ENCODE measurements at regions of chr19 and their contacts with region 1.

Region 1: GRCh38 chr19:11125994-11126685 is 29.4 kb downstream of the SPC24 start:
- H3K4me3 ChIP-seq: no peak overlapping the region
- H3K27ac ChIP-seq: no peak overlapping the region
- H3K4me1 ChIP-seq: no peaks in the 10 kb centered on the region
- CTCF ChIP-seq: peak; percentile 66

Region 2: GRCh38 chr19:11035441-11036377 is 90.4 kb before region 1 on chr19:
- CTCF ChIA-PET with region 1: interaction called, 26 read pairs
- POLR2A ChIA-PET with region 1: no interaction called
- H3K4me3 ChIP-seq: no peak overlapping the region
- H3K27ac ChIP-seq: no peak overlapping the region
- H3K4me1 ChIP-seq: no peaks in the 10 kb centered on the region
- CTCF ChIP-seq: peak; percentile 84

Region 3: GRCh38 chr19:11073568-11073967 is 52.6 kb before region 1 on chr19:
- CTCF ChIA-PET with region 1: no interaction called
- POLR2A ChIA-PET with region 1: no interaction called
- H3K4me3 ChIP-seq: no peak overlapping the region
- H3K27ac ChIP-seq: no peak overlapping the region
- H3K4me1 ChIP-seq: no peaks in the 10 kb centered on the region
- CTCF ChIP-seq: no peak

Region 4: GRCh38 chr19:11090054-11090900 is 35.9 kb before region 1 on chr19:
- CTCF ChIA-PET with region 1: interaction called, 26 read pairs
- POLR2A ChIA-PET with region 1: interaction called, 5 read pairs
- H3K4me3 ChIP-seq: peak overlapping the region; percentile 48
- H3K27ac ChIP-seq: peak overlapping the region; percentile 92
- H3K4me1 ChIP-seq: peaks cover 10% of the 10 kb centered on the region; the same call in 1 of the 2 replicates
- CTCF ChIP-seq: peak; percentile 86

Region 5: GRCh38 chr19:11096210-11096841 is 29.8 kb before region 1 on chr19:
- CTCF ChIA-PET with region 1: interaction called, 26 read pairs
- POLR2A ChIA-PET with region 1: interaction called, 5 read pairs
- H3K4me3 ChIP-seq: no peak overlapping the region
- H3K27ac ChIP-seq: no peak overlapping the region
- H3K4me1 ChIP-seq: 0 out of 2 replicates have a peak, but pooled peaks cover 3% of the 10 kb centered on the region
- CTCF ChIP-seq: no peak

Region 6: DNA sequence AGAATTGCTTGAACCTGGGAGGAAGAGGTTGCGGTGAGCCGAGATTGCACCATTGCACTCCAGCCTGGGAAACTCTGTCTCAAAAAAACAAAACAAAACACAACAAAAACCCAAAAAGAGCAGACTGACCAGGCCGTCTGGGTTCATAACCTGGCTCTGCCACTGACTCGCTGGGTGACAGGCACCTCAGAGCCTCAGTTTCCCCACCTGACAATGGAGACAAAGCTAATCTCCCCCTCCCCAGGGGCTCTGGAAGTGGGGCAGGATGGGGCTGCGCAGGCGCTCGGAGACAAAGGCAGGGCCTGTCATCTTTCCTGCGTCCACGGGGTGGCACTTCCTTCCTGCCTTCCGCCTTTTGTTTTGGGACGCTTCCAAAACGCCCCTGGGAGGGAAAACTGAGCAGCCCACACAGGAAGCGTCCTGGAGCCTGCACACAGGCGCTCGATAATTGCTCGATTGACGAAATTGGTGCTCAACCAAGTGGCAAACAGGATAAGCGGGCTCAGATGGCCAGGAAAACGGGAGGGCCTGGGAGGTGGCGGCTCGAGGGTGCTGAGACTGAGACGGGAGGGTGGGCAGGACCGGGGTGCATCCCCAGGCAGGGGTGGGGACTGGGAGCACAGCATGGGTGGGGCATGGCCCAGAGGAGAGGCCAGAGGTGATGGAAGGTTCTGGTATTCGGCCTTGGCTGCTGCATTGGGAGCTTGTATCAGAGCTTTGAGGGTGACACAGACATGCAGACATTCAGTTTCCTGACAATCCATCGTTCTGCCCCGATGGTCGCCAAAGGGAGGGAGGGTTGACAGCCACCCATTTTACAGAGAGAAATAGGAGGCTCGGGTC is 11.6 kb after region 1 on chr19:
- CTCF ChIA-PET with region 1: interaction called, 11 read pairs
- POLR2A ChIA-PET with region 1: interaction called, 6 read pairs
- H3K4me3 ChIP-seq: peak overlapping the region; percentile 8
- H3K27ac ChIP-seq: no peak overlapping the region; the same call in 1 of the 2 replicates
- H3K4me1 ChIP-seq: peaks cover 19% of the 10 kb centered on the region
- CTCF ChIP-seq: peak; percentile 80

Region 7: GRCh38 chr19:11203194-11204075 is 77.3 kb after region 1 on chr19:
- CTCF ChIA-PET with region 1: interaction called, 25 read pairs
- POLR2A ChIA-PET with region 1: no interaction called
- H3K4me3 ChIP-seq: no peak overlapping the region
- H3K27ac ChIP-seq: no peak overlapping the region
- H3K4me1 ChIP-seq: 0 out of 2 replicates have a peak, but pooled peaks cover 2% of the 10 kb centered on the region
- CTCF ChIP-seq: peak; percentile 70

Measured in HEK293 (cell line).